Activated CD8-positive, alpha-beta T cell treated with anti-CD3 and anti-CD28 coated beads for 36 hours (primary cell): ENCODE measurements at regions of chr9 and their contacts with region 1.

Region 1: GRCh38 chr9:34591248-34591916 is 1.9 kb upstream of the CNTFR start:
- DNase-seq: peak; percentile 84
- ATAC-seq: peak; percentile 85
- H3K4me3 Mint-ChIP-seq: peak overlapping the region; percentile 53
- H3K27ac Mint-ChIP-seq: no peak overlapping the region
- H3K4me1 Mint-ChIP-seq: peaks cover 23% of the 10 kb centered on the region
- H3K27me3 Mint-ChIP-seq: peaks cover 57% of the 10 kb centered on the region
- CTCF ChIP-seq: peak; percentile 97

Region 2: DNA sequence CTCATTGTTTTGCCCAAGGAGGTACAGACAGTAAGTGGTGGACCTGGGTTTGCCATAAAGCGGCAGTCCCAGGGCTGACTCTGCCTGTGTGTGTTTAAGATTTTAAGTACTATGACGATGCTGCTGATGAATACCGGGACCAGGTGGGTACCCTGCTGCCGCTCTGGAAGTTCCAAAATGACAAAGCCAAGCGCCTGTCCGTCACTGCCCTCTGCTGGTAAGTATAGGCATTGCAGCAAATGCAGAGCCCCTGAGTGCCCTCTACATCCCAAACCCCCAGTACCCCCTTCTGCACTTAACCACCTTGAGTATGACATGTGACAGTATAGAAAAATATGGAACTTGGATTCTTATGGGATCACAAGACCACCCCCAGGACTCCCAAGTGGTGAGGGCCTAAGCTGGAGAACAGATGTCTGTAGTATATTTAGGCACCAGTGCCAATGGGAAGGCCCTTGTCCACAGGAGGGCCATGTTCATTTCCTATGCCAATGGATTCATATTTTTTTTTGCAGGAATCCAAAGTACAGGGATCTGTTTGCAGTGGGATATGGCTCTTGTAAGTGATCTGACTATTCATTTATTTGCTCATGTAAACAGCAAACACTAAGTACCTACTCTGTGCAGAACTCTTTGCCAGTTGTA is 90.6 kb before region 1 on chr9:
- CTCF ChIA-PET with region 1: interaction called, 12 read pairs
- POLR2A ChIA-PET with region 1: no interaction called
- intact Hi-C with region 1: no loop called
- DNase-seq: peak; percentile 84
- ATAC-seq: peak; percentile 95
- H3K4me3 Mint-ChIP-seq: no peak overlapping the region
- H3K27ac Mint-ChIP-seq: no peak overlapping the region
- H3K4me1 Mint-ChIP-seq: peaks cover 3% of the 10 kb centered on the region
- H3K27me3 Mint-ChIP-seq: peaks cover 6% of the 10 kb centered on the region
- CTCF ChIP-seq: peak; percentile 97

Region 3: GRCh38 chr9:34562136-34562745 is 29.1 kb before region 1 on chr9:
- CTCF ChIA-PET with region 1: interaction called, 43 read pairs
- POLR2A ChIA-PET with region 1: no interaction called
- intact Hi-C with region 1: no loop called
- DNase-seq: peak; percentile 64
- ATAC-seq: peak; percentile 56
- H3K4me3 Mint-ChIP-seq: no peak overlapping the region
- H3K27ac Mint-ChIP-seq: no peak overlapping the region
- H3K4me1 Mint-ChIP-seq: no peaks in the 10 kb centered on the region
- H3K27me3 Mint-ChIP-seq: peaks cover 37% of the 10 kb centered on the region
- CTCF ChIP-seq: peak; percentile 85

Region 4: DNA sequence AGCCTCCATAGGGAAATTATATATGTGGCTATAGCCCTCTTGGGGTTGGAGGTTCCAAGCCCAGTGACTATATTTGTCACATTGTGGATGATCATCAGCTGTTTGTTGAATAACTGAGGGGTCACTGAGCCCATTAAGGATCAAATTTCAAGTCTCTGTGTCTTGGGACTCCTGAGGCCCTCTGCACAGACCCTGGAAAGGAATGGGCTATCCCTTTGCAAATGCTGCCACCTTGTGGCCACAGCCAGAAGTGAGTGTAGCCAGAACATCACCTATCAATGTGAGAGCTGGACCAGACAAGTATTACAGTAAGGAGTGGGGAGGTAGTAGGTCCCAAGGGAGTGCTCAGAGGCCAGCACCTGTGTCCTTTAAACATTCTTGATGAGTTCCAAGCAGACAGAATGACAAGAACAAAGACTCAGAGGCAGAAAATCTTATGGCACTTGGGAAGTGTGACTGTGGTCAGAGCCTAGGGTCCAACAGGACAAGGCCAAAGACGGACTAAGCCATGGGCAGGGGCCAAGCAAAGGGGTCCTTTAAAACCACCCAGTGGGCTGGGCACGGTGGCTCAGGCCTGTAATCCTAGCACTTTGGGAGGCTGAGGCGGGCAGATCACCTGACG is 12.3 kb after region 1 on chr9:
- CTCF ChIA-PET with region 1: interaction called, 43 read pairs
- POLR2A ChIA-PET with region 1: interaction called, 4 read pairs
- intact Hi-C with region 1: no loop called
- DNase-seq: peak; percentile 89
- ATAC-seq: peak; percentile 98
- H3K4me3 Mint-ChIP-seq: no peak overlapping the region
- H3K27ac Mint-ChIP-seq: no peak overlapping the region
- H3K4me1 Mint-ChIP-seq: no peaks in the 10 kb centered on the region
- H3K27me3 Mint-ChIP-seq: no peaks in the 10 kb centered on the region
- CTCF ChIP-seq: peak; percentile 82

Region 5: DNA sequence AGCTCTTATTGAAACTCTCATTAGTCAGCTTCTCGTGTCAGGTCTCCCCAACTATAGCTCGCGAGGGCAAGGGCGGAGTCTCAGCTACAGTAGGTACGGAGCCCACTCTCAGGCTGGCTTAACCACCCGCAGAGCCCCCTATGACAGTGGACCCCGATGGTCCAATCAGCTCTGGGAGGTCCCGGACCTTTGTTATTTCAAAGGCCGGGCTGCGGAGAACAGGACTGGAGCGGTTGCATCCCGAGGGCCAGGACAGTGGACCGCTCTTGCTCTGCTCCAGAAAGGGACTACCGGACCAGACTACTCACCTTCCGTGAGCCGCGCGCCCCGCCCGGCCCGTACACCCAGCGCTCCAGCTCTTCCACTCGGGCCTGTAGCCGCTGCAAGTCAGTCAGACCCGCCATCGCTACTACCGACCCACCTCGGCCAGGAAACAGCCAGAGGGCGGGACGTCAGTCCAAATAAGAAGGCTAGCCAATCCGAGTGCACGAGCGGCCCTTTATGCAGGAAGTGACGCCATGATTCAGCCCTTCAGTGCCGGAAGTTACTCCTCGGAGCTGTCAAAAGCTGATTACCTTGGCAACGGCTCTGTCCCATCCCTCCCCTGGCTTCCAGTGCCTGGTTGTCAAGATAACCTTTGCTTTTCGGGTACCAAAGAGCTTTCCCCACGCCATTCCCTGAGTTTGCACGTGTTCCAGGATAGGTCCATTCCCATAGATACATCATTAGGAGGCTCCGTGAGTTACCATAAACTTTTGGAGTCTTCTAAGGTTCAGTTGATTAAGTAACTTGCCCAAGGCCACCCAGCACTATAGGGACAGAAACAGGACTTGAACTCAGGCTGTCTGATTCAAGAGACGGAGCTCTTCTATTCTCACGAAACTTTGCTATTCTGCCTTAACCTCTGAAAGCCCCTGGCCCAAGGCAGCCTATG is 28.9 kb after region 1 on chr9 and contains the start of gene DCTN3:
- CTCF ChIA-PET with region 1: interaction called, 11 read pairs
- POLR2A ChIA-PET with region 1: interaction called, 3 read pairs
- intact Hi-C with region 1: no loop called
- DNase-seq: peak; percentile 97
- ATAC-seq: peak; percentile 99
- H3K4me3 Mint-ChIP-seq: peak within 1 kb of the TSS; percentile 91
- H3K27ac Mint-ChIP-seq: peak within 1 kb of the TSS; percentile 75
- H3K4me1 Mint-ChIP-seq: peaks cover 26% of the 10 kb centered on the region
- H3K27me3 Mint-ChIP-seq: peaks cover 17% of the 10 kb centered on the region
- CTCF ChIP-seq: no peak
- total RNA-seq, gene DCTN3: 52.7 to 61.0 TPM